Naive thymus-derived CD4-positive, alpha-beta T cell (primary cell): ENCODE measurements at regions of chr19 and their contacts with region 1.

Region 1: DNA sequence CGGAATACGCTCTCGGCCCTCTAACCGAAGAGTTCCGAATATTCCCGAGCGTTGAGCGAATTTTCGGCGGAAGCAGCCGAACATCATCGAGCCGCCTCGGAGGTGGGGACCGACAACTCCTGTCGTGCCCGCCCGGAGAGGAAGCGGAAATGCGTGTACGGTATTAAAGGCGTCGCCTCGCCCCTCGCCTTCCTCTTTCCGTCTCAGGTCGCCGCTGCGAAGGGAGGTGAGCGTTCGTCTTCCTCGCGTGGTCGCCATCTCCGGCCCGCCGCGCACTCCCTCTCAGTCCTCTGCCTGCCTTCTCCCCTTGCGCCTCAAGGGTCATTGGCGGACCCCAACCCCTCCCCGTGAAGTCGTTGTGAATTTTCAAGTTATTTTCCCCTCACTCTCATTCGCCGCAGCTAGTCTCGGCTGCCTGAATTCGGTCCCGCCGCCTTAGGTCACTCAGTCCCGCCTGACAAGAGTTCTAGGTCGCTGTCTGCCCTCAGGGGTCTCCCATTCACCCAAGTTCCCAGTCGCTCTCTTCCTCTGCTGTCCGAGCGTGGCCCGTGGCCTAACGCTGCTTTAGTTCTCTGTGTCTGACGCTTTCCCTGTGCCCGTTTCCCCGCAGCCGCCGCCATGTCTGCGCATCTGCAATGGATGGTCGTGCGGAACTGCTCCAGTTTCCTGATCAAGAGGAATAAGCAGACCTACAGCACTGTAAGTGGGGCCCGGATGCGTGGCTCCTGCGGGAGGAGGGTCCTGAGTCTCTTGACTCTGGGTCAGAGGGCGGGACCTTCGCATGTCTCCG is at the start of gene RPL28:
- DNase-seq: peak; percentile 92 to 99 (median 99)
- ATAC-seq: peak; percentile 89
- H3K4me3 ChIP-seq: peak within 1 kb of the TSS; percentile 92
- H3K4me3 Mint-ChIP-seq: peak within 1 kb of the TSS; percentile 94 to 100 (median 100)
- H3K27ac ChIP-seq: peak within 1 kb of the TSS; percentile 91
- H3K27ac Mint-ChIP-seq: peak within 1 kb of the TSS; percentile 91 to 100 (median 99)
- H3K4me1 ChIP-seq: peaks cover 45 to 53% of the 10 kb centered on the region in 2 donors
- H3K4me1 Mint-ChIP-seq: peaks cover 41 to 79% (median 70%) of the 10 kb centered on the region in 7 donors
- H3K27me3 ChIP-seq: no peaks in the 10 kb centered on the region
- H3K27me3 Mint-ChIP-seq: peaks cover 0 to 3% (median 0%) of the 10 kb centered on the region in 5 donors
- total RNA-seq, gene RPL28: 2,549 to 3,799 (median 3,242) TPM

Region 2: GRCh38 chr19:55232296-55232622 is 153.7 kb before region 1 on chr19:
- CTCF ChIA-PET with region 1: no interaction called
- POLR2A ChIA-PET with region 1: no interaction called
- intact Hi-C with region 1: no loop called
- DNase-seq: no peak
- ATAC-seq: no peak
- H3K4me3 ChIP-seq: no peak overlapping the region
- H3K4me3 Mint-ChIP-seq: no peak overlapping the region
- H3K27ac ChIP-seq: no peak overlapping the region
- H3K27ac Mint-ChIP-seq: peak overlapping the region in 1 of 9 donors; percentile 0
- H3K4me1 ChIP-seq: no peaks in the 10 kb centered on the region
- H3K4me1 Mint-ChIP-seq: peaks cover 0 to 9% (median 2%) of the 10 kb centered on the region in 7 donors
- H3K27me3 ChIP-seq: no peaks in the 10 kb centered on the region
- H3K27me3 Mint-ChIP-seq: no peaks in the 10 kb centered on the region

Region 3: DNA sequence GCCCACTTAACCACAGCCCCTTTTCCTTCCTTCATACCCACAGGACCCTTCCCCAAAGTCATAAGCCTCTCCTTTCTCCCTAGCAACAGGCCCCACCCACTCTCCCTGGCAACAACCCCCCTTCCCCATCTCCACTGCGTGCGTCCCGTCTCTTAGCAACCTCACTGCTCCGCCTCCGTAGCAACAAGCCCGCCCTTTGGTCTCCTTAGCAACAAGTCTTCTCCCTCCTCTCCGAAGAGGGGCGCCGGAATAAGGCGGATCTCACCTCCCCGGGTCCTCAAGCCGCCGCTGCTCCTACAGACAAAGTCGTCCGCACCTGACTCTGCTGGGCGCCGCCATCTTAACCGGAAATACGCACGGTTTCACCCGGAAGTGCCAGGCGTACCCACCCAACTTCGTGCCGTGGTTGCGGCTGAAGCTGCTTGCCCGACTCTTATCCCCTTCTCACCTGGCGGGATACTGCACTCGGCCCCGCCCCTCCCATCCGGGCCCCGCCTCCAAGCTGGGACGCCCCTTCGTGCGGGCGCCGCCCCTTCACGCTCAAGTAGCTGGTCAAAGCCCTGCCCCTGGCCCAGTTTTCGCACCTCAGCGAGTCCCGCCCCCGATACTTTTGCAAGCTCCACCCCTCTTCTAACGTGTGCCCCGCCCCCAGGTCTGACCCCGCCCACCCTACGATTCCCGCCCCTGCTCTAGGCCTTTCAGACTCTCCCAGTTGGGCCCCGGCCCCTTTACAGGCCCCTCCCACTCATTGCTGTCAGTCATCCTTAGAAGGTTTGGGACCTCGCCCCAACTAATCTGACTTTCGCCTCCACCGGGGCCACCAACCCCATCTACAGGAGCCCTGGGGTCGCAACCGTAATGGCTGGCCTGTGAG is 105.9 kb before region 1 on chr19 and contains the start of gene HSPBP1:
- CTCF ChIA-PET with region 1: no interaction called
- POLR2A ChIA-PET with region 1: interaction called, 7 read pairs
- intact Hi-C with region 1: loop called (anchors 1 kb)
- DNase-seq: peak; percentile 88 to 96 (median 96)
- ATAC-seq: peak; percentile 92
- H3K4me3 ChIP-seq: peak within 1 kb of the TSS; percentile 91
- H3K4me3 Mint-ChIP-seq: peak within 1 kb of the TSS; percentile 92 to 100 (median 98)
- H3K27ac ChIP-seq: peak within 1 kb of the TSS; percentile 89
- H3K27ac Mint-ChIP-seq: peak within 1 kb of the TSS; percentile 91 to 100 (median 98)
- H3K4me1 ChIP-seq: peaks cover 6 to 32% of the 10 kb centered on the region in 2 donors
- H3K4me1 Mint-ChIP-seq: peaks cover 12 to 52% (median 39%) of the 10 kb centered on the region in 7 donors
- H3K27me3 ChIP-seq: no peaks in the 10 kb centered on the region
- H3K27me3 Mint-ChIP-seq: peaks cover 0 to 9% (median 0%) of the 10 kb centered on the region in 5 donors
- total RNA-seq, gene HSPBP1: 15.0 to 30.0 (median 16.0) TPM

Region 4: GRCh38 chr19:55353803-55354697 is 31.9 kb before region 1 on chr19:
- CTCF ChIA-PET with region 1: no interaction called
- POLR2A ChIA-PET with region 1: interaction called, 3 read pairs
- intact Hi-C with region 1: loop called in 1 of 2 experiments (anchors 5 kb)
- DNase-seq: peak in 8 of 9 donors; percentile 44 to 70 (median 58)
- ATAC-seq: peak; percentile 90
- H3K4me3 ChIP-seq: peak overlapping the region; percentile 48
- H3K4me3 Mint-ChIP-seq: peak overlapping the region; percentile 66 to 86 (median 80)
- H3K27ac ChIP-seq: no peak overlapping the region
- H3K27ac Mint-ChIP-seq: peak overlapping the region in 2 of 9 donors; percentile 18 to 56
- H3K4me1 ChIP-seq: peaks cover 7 to 10% of the 10 kb centered on the region in 2 donors
- H3K4me1 Mint-ChIP-seq: peaks cover 14 to 25% (median 17%) of the 10 kb centered on the region in 7 donors
- H3K27me3 ChIP-seq: peaks cover 0 to 10% of the 10 kb centered on the region in 2 donors
- H3K27me3 Mint-ChIP-seq: peaks cover 25 to 55% (median 30%) of the 10 kb centered on the region in 5 donors

Region 5: DNA sequence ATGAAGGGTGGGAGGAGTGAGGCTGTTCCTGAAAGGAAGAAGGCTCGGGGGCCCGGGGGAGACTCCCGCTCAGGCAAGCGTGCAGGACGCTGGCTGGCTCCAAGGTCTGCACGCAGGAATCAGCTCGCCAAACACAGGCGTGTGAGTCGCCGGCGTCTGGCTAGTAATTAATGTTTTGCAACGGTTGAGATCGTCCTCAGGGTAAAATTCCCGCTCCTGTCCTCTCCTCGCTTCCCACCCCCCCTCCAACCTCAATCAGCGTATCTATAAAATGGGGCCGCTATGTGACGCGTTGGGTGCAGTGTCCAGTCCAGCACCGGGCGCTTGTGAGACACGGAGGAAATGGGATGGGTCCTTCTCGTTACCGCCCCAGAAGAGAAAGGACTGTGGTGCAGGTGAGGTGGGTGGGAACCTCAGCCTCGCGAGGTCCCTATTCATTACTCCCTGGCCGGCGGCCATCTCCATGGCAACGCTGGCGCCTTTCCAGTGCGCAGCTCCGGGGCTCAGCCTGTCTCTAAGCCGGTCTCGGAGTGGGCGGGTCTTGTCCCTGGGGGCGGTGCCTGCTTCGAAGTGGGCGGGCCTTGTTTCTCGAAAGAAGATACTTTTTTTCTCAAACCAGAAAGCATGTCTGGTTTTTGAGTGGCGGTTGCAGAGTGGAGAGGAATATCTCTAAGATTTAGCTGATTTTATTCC is 201.2 kb after region 1 on chr19:
- CTCF ChIA-PET with region 1: no interaction called
- POLR2A ChIA-PET with region 1: no interaction called
- intact Hi-C with region 1: loop called in 1 of 2 experiments (anchors 10 kb)
- DNase-seq: peak; percentile 83 to 92 (median 89)
- ATAC-seq: peak; percentile 99
- H3K4me3 ChIP-seq: peak overlapping the region; percentile 63
- H3K4me3 Mint-ChIP-seq: peak overlapping the region; percentile 83 to 95 (median 88)
- H3K27ac ChIP-seq: peak overlapping the region; percentile 32
- H3K27ac Mint-ChIP-seq: peak overlapping the region; percentile 16 to 88 (median 86)
- H3K4me1 ChIP-seq: peaks cover 10 to 22% of the 10 kb centered on the region in 2 donors
- H3K4me1 Mint-ChIP-seq: peaks cover 8 to 41% (median 27%) of the 10 kb centered on the region in 7 donors
- H3K27me3 ChIP-seq: no peaks in the 10 kb centered on the region
- H3K27me3 Mint-ChIP-seq: peaks cover 0 to 32% (median 0%) of the 10 kb centered on the region in 5 donors